Endothelial cell of umbilical vein (primary cell): ENCODE measurements at regions of chr3 and their contacts with region 1.

Region 1: DNA sequence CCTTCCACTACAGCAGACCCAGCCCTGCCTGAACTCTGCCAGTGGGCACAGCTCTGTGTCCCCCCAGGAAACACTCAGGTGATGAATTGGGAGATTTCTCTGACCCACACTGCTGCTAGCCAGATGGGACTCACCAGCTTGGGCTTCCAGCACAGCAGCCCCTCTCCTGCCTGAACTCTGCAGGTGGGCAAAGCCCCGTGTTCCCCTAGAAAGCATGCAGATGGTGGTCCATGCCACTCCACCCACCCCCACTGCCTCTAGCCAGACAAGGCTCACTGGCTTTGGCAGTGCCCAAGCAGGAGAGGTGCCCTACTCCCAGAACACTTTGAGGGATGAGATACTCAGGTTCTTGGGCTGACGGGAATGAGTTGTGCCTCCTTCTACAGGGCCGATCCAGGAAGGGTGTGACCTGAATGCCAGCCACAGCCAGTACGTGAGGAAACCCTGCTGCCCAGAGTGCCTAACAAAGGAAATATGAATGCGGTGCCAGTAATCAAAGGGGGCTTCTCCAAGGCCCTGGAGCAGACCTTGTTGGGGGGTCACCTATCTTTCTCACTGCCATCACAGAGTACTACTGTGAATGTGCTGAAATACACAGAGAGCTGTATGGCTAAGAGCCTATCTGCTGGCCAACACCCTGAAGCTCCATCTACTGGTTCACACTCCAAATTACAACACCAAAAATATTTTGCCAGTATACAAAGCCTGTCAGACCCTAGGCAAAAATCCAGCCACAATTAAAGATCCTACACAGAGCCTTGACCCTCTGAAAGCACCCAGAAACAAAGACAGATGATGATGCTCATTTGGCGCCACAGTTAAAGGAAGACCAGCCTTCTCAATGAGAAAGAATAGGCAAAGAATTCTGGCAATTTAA is 61.9 kb downstream of the BTLA start:
- DNase-seq: peak; percentile 33
- H3K4me3 ChIP-seq: no peak overlapping the region
- H3K27ac ChIP-seq: no peak overlapping the region
- H3K4me1 ChIP-seq: no peaks in the 10 kb centered on the region
- H3K27me3 ChIP-seq: no peaks in the 10 kb centered on the region
- CTCF ChIP-seq: peak; percentile 36 to 41
- POLR2A ChIP-seq: no peak

Region 2: GRCh38 chr3:112327371-112327951 is 109.9 kb before region 1 on chr3:
- CTCF ChIA-PET with region 1: interaction called, 40 read pairs
- POLR2A ChIA-PET with region 1: no interaction called
- dilution Hi-C with region 1: no loop called
- intact Hi-C with region 1: loop called (anchors 1 kb)
- DNase-seq: peak; percentile 79
- H3K4me3 ChIP-seq: no peak overlapping the region
- H3K27ac ChIP-seq: no peak overlapping the region
- H3K4me1 ChIP-seq: no peaks in the 10 kb centered on the region
- H3K27me3 ChIP-seq: peaks cover 0 to 2% of the 10 kb centered on the region in 2 experiments
- CTCF ChIP-seq: peak; percentile 34 to 53
- POLR2A ChIP-seq: no peak

Region 3: DNA sequence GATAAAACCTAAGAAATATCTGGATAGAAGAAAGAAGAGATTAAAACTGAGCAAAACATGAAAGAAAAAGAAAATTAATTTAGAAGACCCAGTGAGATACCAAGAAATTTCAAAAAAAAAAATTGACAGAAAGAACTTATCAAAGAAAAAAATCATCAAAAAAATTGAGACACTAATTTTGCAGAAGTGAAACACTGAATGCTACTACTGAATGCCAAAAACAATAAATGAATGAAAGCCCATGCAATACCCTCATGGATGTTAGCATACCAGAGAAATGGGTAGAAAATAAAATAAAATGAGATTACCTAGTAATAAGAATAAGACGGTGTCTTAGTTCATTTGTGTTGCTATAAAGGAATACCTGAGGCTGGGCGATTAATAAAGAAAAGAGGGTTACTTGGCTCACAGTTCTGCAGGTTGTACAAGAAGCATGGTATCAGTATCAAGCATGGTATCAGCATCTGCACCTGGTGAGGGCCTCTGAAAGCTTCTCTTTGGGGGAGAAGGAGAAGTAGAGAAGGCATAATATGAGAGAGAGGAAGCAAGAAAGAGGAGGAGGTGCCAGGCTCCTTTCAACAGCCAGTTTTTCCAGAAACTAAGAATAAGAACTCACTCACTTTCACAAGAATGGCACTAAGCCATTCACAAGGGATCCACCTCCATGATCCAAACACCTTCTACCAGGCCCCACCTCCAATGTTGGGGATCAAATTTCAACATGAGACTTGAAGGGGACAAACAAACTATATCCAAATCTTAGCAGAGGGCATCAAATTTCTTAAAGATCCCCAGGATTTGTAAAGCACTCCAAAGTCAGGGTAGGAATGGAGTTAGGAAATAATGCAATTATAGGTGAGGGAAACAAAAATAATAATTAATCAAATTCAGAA is 11.3 kb before region 1 on chr3:
- CTCF ChIA-PET with region 1: interaction called, 14 read pairs
- POLR2A ChIA-PET with region 1: no interaction called
- dilution Hi-C with region 1: no loop called
- intact Hi-C with region 1: no loop called
- DNase-seq: no peak
- H3K4me3 ChIP-seq: no peak overlapping the region
- H3K27ac ChIP-seq: no peak overlapping the region
- H3K4me1 ChIP-seq: no peaks in the 10 kb centered on the region
- H3K27me3 ChIP-seq: no peaks in the 10 kb centered on the region
- CTCF ChIP-seq: no peak
- POLR2A ChIP-seq: no peak

Region 4: DNA sequence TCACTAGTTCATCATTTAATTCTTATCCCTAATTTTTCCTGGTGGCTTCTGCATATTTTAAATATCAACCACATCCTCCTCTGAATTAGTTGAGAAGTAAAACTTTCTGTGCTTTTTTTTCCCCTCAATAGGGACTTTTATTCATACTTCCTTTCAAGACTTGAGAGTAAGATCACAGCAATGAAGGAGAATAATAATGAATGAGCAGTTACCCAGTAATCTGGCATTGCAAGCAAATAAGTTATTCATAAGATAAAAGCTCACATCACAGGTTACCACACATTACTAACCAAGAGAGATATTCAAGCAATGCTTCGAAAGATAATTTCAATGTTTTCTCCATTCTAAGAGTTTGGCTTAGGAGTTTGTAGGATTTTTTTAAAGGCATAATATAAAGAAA is 11.6 kb after region 1 on chr3:
- CTCF ChIA-PET with region 1: no interaction called
- POLR2A ChIA-PET with region 1: no interaction called
- dilution Hi-C with region 1: no loop called
- intact Hi-C with region 1: no loop called
- DNase-seq: no peak
- H3K4me3 ChIP-seq: no peak overlapping the region
- H3K27ac ChIP-seq: no peak overlapping the region
- H3K4me1 ChIP-seq: no peaks in the 10 kb centered on the region
- H3K27me3 ChIP-seq: no peaks in the 10 kb centered on the region
- CTCF ChIP-seq: no peak
- POLR2A ChIP-seq: no peak